ENCODE measurements at regions of chr14 and their contacts with region 1.

Region 1: DNA sequence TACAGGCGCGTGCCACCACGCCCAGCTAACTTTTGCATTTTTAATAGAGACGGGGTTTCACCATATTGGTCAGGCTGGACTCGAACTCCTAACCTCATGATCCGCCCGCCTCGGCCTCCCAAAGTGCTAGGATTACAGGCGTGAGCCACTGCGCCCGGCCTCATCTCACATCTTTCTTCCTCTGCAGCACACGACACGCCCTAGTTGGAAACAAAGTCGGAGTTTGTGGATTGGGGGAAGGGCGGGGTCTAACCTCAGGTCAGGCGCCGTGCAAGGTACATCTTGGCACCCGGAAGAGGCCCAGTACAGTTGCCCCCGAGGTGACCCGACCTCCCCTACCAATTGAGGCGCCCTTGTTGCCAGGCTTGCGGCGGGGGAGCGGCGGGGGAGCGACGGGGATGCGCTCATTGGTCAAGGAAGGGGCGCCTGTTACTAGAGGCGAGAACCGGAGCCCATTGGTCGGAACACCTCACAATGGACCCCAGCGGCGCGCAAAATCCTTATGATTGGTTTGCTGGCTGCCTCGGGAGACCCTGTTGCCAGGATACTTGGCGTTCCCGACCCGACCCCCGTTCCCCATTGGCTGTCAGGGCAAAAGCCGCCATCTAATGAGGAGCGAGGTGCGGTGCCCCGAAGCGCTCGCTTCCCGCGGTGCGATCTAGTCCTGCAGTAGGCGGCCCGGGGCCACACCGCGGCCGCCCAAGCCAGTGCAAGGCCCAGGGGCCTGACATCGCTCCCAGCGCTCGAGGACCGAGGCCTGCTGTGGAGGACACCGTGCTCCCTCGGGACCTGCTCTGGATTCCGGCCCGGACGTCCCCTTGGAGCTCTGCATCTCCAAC is at the start of gene REC8:
- DNase-seq: peak; percentile 85
- ATAC-seq: peak; percentile 77
- H3K4me3 Mint-ChIP-seq: peak within 1 kb of the TSS; percentile 77
- H3K27ac Mint-ChIP-seq: peak within 1 kb of the TSS; percentile 81
- H3K4me1 Mint-ChIP-seq: peaks cover 50% of the 10 kb centered on the region
- H3K27me3 Mint-ChIP-seq: no peaks in the 10 kb centered on the region
- total RNA-seq, gene REC8: 54.5 to 58.6 TPM

Region 2: DNA sequence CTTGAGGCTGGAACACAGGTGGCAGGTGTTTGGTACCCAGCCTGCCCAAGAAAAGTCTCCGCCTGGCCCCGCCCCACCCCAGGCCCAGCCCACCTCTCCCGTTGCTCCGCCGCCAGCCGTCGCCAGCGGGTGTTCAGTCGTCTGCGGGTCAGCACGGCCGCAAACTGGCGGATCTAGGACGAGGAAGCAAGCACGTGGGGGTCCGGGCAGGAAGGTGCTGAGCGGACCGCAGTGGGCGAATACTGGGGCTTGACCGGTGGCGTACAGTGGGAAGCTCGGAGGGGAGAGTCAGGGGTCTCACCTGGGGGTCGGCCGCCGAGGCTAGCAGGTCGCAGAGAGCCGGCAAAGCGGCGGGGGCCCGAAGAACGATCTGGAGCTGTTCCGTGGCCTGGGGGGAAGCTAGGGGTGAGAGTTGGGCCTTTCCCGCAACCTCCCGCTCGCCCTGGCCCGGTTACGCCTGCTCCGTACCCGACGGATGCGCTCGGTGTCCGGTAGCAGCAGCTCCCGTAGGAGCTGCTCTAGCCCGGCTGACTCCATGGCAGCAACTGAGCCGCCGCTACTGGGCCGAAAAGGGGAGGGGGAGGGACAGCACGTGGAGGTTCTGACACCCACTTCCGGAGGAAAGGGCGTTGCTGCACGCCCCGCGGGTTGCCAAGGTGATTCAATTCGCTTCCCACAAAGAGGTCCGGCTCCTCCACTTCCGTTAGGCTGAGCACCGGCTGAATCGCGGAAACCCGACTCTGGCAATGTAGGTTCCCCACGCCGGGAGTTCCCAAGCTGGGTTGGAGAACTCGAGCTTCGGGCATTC is 16.8 kb after region 1 on chr14 and contains the start of gene IPO4:
- CTCF ChIA-PET with region 1: interaction called, 3 read pairs
- POLR2A ChIA-PET with region 1: interaction called, 25 read pairs
- DNase-seq: peak; percentile 97
- ATAC-seq: peak; percentile 84
- H3K4me3 Mint-ChIP-seq: peak within 1 kb of the TSS; percentile 92
- H3K27ac Mint-ChIP-seq: peak within 1 kb of the TSS; percentile 87
- H3K4me1 Mint-ChIP-seq: peaks cover 49% of the 10 kb centered on the region
- H3K27me3 Mint-ChIP-seq: no peaks in the 10 kb centered on the region
- total RNA-seq, gene IPO4: 56.3 to 60.1 TPM